ENCODE measurements at regions of chr5 and their contacts with region 1.

Region 1: GRCh38 chr5:176660860-176661641 is 13.8 kb downstream of the TSPAN17 start:
- DNase-seq: peak; percentile 51 to 88 (median 77)
- ATAC-seq: peak; percentile 75
- H3K4me3 ChIP-seq: no peak overlapping the region
- H3K4me3 Mint-ChIP-seq: peak overlapping the region; percentile 42
- H3K27ac ChIP-seq: no peak overlapping the region
- H3K27ac Mint-ChIP-seq: peak overlapping the region; percentile 70
- H3K4me1 ChIP-seq: peaks cover 27% of the 10 kb centered on the region
- H3K4me1 Mint-ChIP-seq: peaks cover 30% of the 10 kb centered on the region
- H3K27me3 ChIP-seq: no peaks in the 10 kb centered on the region
- H3K27me3 Mint-ChIP-seq: peaks cover 8% of the 10 kb centered on the region
- CTCF ChIP-seq: peak; percentile 98

Region 2: GRCh38 chr5:175729829-175730277 is 931.2 kb before region 1 on chr5:
- CTCF ChIA-PET with region 1: interaction called, 7 read pairs
- POLR2A ChIA-PET with region 1: no interaction called
- intact Hi-C with region 1: loop called in 1 of 2 experiments (anchors 5 kb)
- DNase-seq: peak; percentile 86 to 97 (median 89)
- ATAC-seq: peak; percentile 86
- H3K4me3 ChIP-seq: no peak overlapping the region
- H3K4me3 Mint-ChIP-seq: no peak overlapping the region
- H3K27ac ChIP-seq: no peak overlapping the region
- H3K27ac Mint-ChIP-seq: no peak overlapping the region
- H3K4me1 ChIP-seq: peaks cover 7% of the 10 kb centered on the region
- H3K4me1 Mint-ChIP-seq: peaks cover 8% of the 10 kb centered on the region
- H3K27me3 ChIP-seq: peaks cover 2 to 6% of the 10 kb centered on the region in 2 experiments
- H3K27me3 Mint-ChIP-seq: peaks cover 26% of the 10 kb centered on the region
- CTCF ChIP-seq: peak; percentile 91

Region 3: GRCh38 chr5:176671890-176672747 is 11.1 kb after region 1 on chr5:
- CTCF ChIA-PET with region 1: interaction called, 31 read pairs
- POLR2A ChIA-PET with region 1: no interaction called
- intact Hi-C with region 1: no loop called
- DNase-seq: no peak
- ATAC-seq: no peak
- H3K4me3 ChIP-seq: no peak overlapping the region
- H3K4me3 Mint-ChIP-seq: no peak overlapping the region
- H3K27ac ChIP-seq: no peak overlapping the region
- H3K27ac Mint-ChIP-seq: no peak overlapping the region
- H3K4me1 ChIP-seq: no peaks in the 10 kb centered on the region
- H3K4me1 Mint-ChIP-seq: no peaks in the 10 kb centered on the region
- H3K27me3 ChIP-seq: peaks cover 0 to 3% of the 10 kb centered on the region in 2 experiments
- H3K27me3 Mint-ChIP-seq: peaks cover 24% of the 10 kb centered on the region
- CTCF ChIP-seq: no peak

Region 4: GRCh38 chr5:176700239-176700847 is 39.3 kb after region 1 on chr5:
- CTCF ChIA-PET with region 1: interaction called, 10 read pairs
- POLR2A ChIA-PET with region 1: no interaction called
- intact Hi-C with region 1: no loop called
- DNase-seq: peak in 2 of 9 experiments; percentile 34 to 39
- ATAC-seq: no peak
- H3K4me3 ChIP-seq: no peak overlapping the region
- H3K4me3 Mint-ChIP-seq: no peak overlapping the region
- H3K27ac ChIP-seq: no peak overlapping the region
- H3K27ac Mint-ChIP-seq: no peak overlapping the region
- H3K4me1 ChIP-seq: no peaks in the 10 kb centered on the region
- H3K4me1 Mint-ChIP-seq: no peaks in the 10 kb centered on the region
- H3K27me3 ChIP-seq: peaks cover 1 to 3% of the 10 kb centered on the region in 2 experiments
- H3K27me3 Mint-ChIP-seq: peaks cover 55% of the 10 kb centered on the region
- CTCF ChIP-seq: no peak

Region 5: GRCh38 chr5:176959051-176959450 is 298.0 kb after region 1 on chr5:
- CTCF ChIA-PET with region 1: interaction called, 11 read pairs
- POLR2A ChIA-PET with region 1: no interaction called
- intact Hi-C with region 1: loop called (anchors 1 to 2 kb)
- DNase-seq: peak in 2 of 9 experiments; percentile 51 to 64
- ATAC-seq: peak; percentile 64
- H3K4me3 ChIP-seq: no peak overlapping the region
- H3K4me3 Mint-ChIP-seq: no peak overlapping the region
- H3K27ac ChIP-seq: no peak overlapping the region
- H3K27ac Mint-ChIP-seq: no peak overlapping the region
- H3K4me1 ChIP-seq: no peaks in the 10 kb centered on the region
- H3K4me1 Mint-ChIP-seq: peaks cover 6% of the 10 kb centered on the region
- H3K27me3 ChIP-seq: no peaks in the 10 kb centered on the region
- H3K27me3 Mint-ChIP-seq: no peaks in the 10 kb centered on the region
- CTCF ChIP-seq: peak; percentile 56